Right ventricle myocardium inferior (tissue), 1 donor: ENCODE measurements at regions of chr13 and their contacts with region 1.

Region 1: DNA sequence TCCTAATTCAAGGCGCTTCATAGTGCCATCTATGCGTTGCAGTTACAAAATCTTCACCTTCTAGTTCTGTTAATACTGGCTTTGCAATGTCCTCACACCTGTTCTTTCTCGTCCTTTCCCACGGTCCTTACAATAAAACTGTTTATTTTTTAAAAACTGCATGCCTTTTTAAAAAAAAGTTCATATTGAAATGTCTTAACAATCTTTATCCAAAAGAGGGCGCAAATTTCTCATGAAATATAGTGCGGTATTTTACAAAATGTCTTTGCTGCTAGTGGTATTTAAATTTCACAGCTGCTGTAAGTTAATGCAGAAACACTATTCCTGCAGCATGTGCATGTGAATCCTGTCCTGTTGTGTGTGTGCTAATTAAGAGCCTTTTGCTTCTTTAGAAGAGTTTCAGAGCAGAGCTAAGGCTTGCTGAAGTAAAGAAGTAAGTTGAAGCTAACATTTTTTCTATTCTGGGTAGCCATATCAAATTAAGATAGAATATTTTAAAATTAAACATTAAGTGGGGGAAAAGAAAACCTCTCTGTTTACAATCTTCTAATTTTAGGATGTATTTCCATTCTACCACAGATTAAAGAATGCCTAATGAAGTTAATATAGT is 15.8 kb upstream of the CLDN10 start:
- DNase-seq: no peak
- ATAC-seq: no peak

Region 2: GRCh38 chr13:95023405-95023804 is 513.3 kb before region 1 on chr13:
- intact Hi-C with region 1: no loop called
- DNase-seq: no peak
- ATAC-seq: no peak

Region 3: DNA sequence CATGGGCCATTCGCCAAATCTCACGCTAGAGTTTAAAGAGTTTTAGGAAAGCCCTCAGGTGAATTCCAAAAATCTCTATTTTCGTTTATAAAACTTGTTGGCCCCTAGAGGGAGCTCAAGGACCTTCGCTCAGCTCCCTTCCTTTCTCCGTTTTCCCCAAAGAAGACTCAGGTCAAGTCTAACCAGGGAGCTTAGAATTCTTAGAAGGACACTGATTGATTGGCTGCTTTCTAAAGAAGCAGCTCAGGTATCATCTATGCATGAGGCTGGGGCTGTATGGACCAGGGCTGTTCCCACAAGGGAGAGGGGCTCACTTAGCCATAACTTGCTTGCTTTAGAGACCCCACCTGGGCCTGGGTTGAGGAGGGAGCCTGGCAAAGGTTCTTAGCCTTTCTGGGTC is 87.3 kb after region 1 on chr13:
- intact Hi-C with region 1: loop called (anchors 5 kb)
- DNase-seq: no peak
- ATAC-seq: peak; percentile 60

Region 4: GRCh38 chr13:95644601-95645052 is 107.9 kb after region 1 on chr13 and contains the start of gene DZIP1:
- intact Hi-C with region 1: no loop called
- DNase-seq: peak; percentile 90
- ATAC-seq: peak; percentile 92
- total RNA-seq, gene DZIP1: 4.7 TPM